ENCODE measurements at regions of chr17 and their contacts with region 1.

Region 1: GRCh38 chr17:45148183-45149036 is at the start of gene HEXIM1:
- DNase-seq: peak; percentile 100
- H3K4me3 ChIP-seq: peak within 1 kb of the TSS; percentile 75
- H3K27ac ChIP-seq: peak within 1 kb of the TSS; percentile 88
- H3K4me1 ChIP-seq: peaks cover 46% of the 10 kb centered on the region
- CTCF ChIP-seq: no peak
- total RNA-seq, gene HEXIM1: 12.1 and 13.9 TPM in 2 replicates

Region 2: GRCh38 chr17:45161019-45161825 is 12.8 kb after region 1 on chr17:
- CTCF ChIA-PET with region 1: interaction called, 4 read pairs
- POLR2A ChIA-PET with region 1: interaction called, 17 read pairs
- intact Hi-C with region 1: loop called (anchors 1 kb)
- DNase-seq: peak; percentile 100
- H3K4me3 ChIP-seq: peak overlapping the region; percentile 96
- H3K27ac ChIP-seq: peak overlapping the region; percentile 70
- H3K4me1 ChIP-seq: peaks cover 22% of the 10 kb centered on the region
- CTCF ChIP-seq: no peak; the same call in none of the 2 replicates

Region 3: DNA sequence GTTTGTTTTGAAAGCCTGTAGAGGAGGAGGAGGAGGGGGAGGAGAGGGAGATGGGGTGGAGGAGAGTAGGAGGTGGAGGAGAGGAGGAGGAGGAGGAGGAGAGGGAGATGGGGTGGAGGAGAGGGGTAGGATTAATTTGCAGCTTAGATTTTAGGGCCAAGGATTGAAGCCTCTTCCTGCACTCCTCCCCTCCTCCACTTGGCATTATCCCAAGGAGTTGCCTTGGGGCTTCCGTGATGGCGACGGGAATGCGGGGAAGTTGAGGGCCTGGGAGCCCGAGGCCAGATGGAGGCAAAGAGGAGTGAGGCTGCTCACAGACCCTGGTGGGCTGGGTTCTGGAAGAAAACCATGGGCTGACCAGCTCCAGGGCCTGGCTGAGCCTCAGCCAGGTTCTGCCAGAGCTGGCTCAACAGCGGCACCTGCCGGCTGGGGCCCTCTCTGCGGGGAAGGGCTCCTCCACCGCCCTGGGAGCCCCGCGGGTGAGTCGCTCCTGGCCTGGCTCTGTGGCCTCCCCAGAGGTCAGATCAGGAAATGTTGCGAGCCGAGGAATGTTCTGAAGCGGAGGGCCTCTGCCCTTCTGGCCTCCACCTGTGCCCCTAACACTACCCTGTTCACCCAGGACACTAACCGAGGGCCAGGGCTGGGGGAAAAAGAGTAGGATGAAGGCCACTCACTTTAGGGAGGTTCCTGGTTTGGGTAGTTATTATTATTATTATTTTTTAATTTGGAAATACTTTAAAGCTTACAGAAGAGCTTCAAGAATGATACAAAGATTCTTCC is 49.3 kb after region 1 on chr17:
- CTCF ChIA-PET with region 1: interaction called, 6 read pairs
- POLR2A ChIA-PET with region 1: interaction called, 8 read pairs
- intact Hi-C with region 1: loop called (anchors 1 kb)
- DNase-seq: peak; percentile 89
- H3K4me3 ChIP-seq: no peak overlapping the region
- H3K27ac ChIP-seq: no peak overlapping the region
- H3K4me1 ChIP-seq: peaks cover 12% of the 10 kb centered on the region
- CTCF ChIP-seq: peak; percentile 99

Region 4: GRCh38 chr17:45256114-45256966 is 107.9 kb after region 1 on chr17:
- CTCF ChIA-PET with region 1: no interaction called
- POLR2A ChIA-PET with region 1: no interaction called
- intact Hi-C with region 1: no loop called
- DNase-seq: no peak
- H3K4me3 ChIP-seq: no peak overlapping the region
- H3K27ac ChIP-seq: no peak overlapping the region
- H3K4me1 ChIP-seq: peaks cover 5% of the 10 kb centered on the region
- CTCF ChIP-seq: no peak